H1 (cell line): ENCODE measurements at regions of chr19 and their contacts with region 1.

Region 1: GRCh38 chr19:31054430-31054829 is 294.8 kb downstream of the TSHZ3 start:
- DNase-seq: peak; percentile 62 to 70
- H3K4me3 ChIP-seq: no peak overlapping the region
- H3K27ac ChIP-seq: no peak overlapping the region
- H3K4me1 ChIP-seq: no peaks in the 10 kb centered on the region; a peak in 2 of 7 replicates
- H3K27me3 ChIP-seq: no peaks in the 10 kb centered on the region
- CTCF ChIP-seq: peak; percentile 84 to 98 (median 98)
- EP300 ChIP-seq: no peak
- POLR2A ChIP-seq: no peak
- RAD21 ChIP-seq: peak; percentile 98

Region 2: DNA sequence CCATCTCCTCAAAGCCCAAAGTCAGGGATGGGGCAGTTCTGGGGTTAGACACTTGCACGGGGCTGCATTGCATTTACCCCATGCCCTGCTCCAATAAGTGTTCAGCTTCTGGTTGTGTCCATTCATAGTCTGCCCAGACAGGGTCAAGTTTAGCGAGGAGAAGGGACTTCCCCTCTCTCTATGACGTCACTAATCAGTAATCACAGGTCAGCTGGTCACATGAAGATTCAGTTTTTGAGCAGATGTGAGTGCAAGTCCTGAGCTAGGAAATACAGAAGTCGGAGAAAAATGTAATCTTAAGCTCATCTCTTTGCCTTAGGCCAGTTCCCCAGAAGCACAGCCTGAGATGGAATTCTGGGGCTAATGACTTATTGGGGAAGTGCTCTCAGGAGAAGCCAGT is 15.3 kb before region 1 on chr19:
- CTCF ChIA-PET with region 1: interaction called, 12 read pairs
- POLR2A ChIA-PET with region 1: no interaction called
- DNase-seq: no peak
- H3K4me3 ChIP-seq: no peak overlapping the region
- H3K27ac ChIP-seq: no peak overlapping the region
- H3K4me1 ChIP-seq: no peaks in the 10 kb centered on the region
- H3K27me3 ChIP-seq: no peaks in the 10 kb centered on the region
- CTCF ChIP-seq: no peak
- EP300 ChIP-seq: no peak
- POLR2A ChIP-seq: no peak
- RAD21 ChIP-seq: no peak

Region 3: GRCh38 chr19:31099515-31100205 is 45.2 kb after region 1 on chr19:
- CTCF ChIA-PET with region 1: interaction called, 18 read pairs
- POLR2A ChIA-PET with region 1: no interaction called
- DNase-seq: no peak
- H3K4me3 ChIP-seq: no peak overlapping the region
- H3K27ac ChIP-seq: no peak overlapping the region
- H3K4me1 ChIP-seq: peaks cover 2 to 11% (median 6%) of the 10 kb centered on the region in 4 experiments; a peak in 2 of 7 replicates
- H3K27me3 ChIP-seq: no peaks in the 10 kb centered on the region; a peak in 1 of 7 replicates
- CTCF ChIP-seq: no peak
- EP300 ChIP-seq: no peak
- POLR2A ChIP-seq: no peak
- RAD21 ChIP-seq: no peak

Region 4: DNA sequence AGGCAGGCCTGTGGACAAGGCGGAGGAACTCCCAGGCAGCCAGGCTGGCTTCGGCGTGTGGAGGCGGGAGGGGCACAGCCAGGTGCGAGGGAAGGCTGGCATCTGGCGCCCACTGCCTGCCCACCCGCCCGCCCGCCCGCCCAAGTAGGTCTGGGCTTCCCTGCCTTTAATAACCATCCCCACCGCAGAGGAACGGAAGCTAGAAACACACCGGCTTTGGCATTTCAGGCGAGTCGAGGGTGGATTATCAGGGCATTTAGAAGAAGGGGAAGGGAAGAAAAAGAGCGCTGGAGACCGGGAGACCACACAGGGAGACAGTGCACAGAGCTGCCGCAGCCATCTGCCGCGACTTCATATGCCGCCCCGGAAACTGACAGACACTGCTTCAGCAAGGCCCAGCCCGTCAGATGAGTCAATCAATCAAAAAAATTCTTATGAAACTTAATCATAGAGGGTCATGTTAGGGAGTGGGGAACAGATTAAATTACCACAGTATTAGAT is 95.1 kb after region 1 on chr19:
- CTCF ChIA-PET with region 1: interaction called, 13 read pairs
- POLR2A ChIA-PET with region 1: no interaction called
- DNase-seq: no peak
- H3K4me3 ChIP-seq: no peak overlapping the region
- H3K27ac ChIP-seq: no peak overlapping the region
- H3K4me1 ChIP-seq: no peaks in the 10 kb centered on the region
- H3K27me3 ChIP-seq: no peaks in the 10 kb centered on the region
- CTCF ChIP-seq: no peak
- EP300 ChIP-seq: no peak
- POLR2A ChIP-seq: no peak
- RAD21 ChIP-seq: no peak

Region 5: GRCh38 chr19:31338069-31338776 is 283.8 kb after region 1 on chr19:
- CTCF ChIA-PET with region 1: interaction called, 10 read pairs
- POLR2A ChIA-PET with region 1: no interaction called
- DNase-seq: peak in 1 of 2 experiments; percentile 75
- H3K4me3 ChIP-seq: no peak overlapping the region
- H3K27ac ChIP-seq: no peak overlapping the region
- H3K4me1 ChIP-seq: peaks cover 2 to 27% (median 11%) of the 10 kb centered on the region in 4 experiments
- H3K27me3 ChIP-seq: no peaks in the 10 kb centered on the region
- CTCF ChIP-seq: peak; percentile 80 to 90 (median 82)
- EP300 ChIP-seq: no peak
- POLR2A ChIP-seq: no peak
- RAD21 ChIP-seq: peak; percentile 64 to 78